GM12878 (cell line): ENCODE measurements at regions of chr11 and their contacts with region 1.

Region 1: GRCh38 chr11:43504316-43504950 is 145.7 kb downstream of the TTC17 start:
- DNase-seq: no peak
- ATAC-seq: peak; percentile 82
- H3K4me3 ChIP-seq: no peak overlapping the region
- H3K27ac ChIP-seq: no peak overlapping the region
- H3K4me1 ChIP-seq: no peaks in the 10 kb centered on the region
- H3K27me3 ChIP-seq: no peaks in the 10 kb centered on the region
- CTCF ChIP-seq: peak; percentile 24 to 54 (median 31); a peak in 4 of 6 replicates
- EP300 ChIP-seq: no peak
- POLR2A ChIP-seq: no peak
- RAD21 ChIP-seq: peak; percentile 68

Region 2: DNA sequence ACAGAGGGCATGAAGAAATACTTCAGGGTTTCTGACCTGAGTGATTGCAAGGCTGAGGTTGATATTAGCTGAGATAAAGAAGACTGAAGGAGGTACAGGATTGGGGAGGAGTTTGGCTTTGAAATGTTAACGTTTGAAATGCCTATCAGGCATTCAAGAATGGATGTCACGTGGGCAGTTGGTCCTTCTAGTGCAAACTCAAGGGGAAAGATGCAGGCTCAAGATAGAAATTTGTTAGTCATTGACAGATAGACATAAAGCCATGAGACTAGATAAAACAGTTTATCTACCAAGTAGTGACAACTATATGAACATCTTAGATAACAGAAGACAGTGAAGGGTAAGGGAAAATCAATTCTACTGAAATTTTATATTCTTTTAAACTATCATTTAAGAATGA is 122.6 kb before region 1 on chr11:
- CTCF ChIA-PET with region 1: no interaction called
- POLR2A ChIA-PET with region 1: no interaction called
- RAD21 ChIA-PET with region 1: no interaction called
- SMC1A ChIA-PET with region 1: no interaction called
- in situ Hi-C with region 1: no loop called
- intact Hi-C with region 1: no loop called
- DNase-seq: no peak
- ATAC-seq: no peak
- H3K4me3 ChIP-seq: no peak overlapping the region
- H3K27ac ChIP-seq: no peak overlapping the region
- H3K4me1 ChIP-seq: no peaks in the 10 kb centered on the region
- H3K27me3 ChIP-seq: no peaks in the 10 kb centered on the region
- CTCF ChIP-seq: no peak
- EP300 ChIP-seq: no peak
- POLR2A ChIP-seq: no peak
- RAD21 ChIP-seq: no peak

Region 3: GRCh38 chr11:43567396-43567975 is 63.1 kb after region 1 on chr11:
- CTCF ChIA-PET with region 1: interaction called, 31 read pairs
- POLR2A ChIA-PET with region 1: interaction called, 9 read pairs
- RAD21 ChIA-PET with region 1: no interaction called
- SMC1A ChIA-PET with region 1: interaction called, 8 read pairs
- in situ Hi-C with region 1: no loop called
- intact Hi-C with region 1: loop called (anchors 1 kb)
- DNase-seq: no peak
- ATAC-seq: peak; percentile 87
- H3K4me3 ChIP-seq: no peak overlapping the region
- H3K27ac ChIP-seq: no peak overlapping the region
- H3K4me1 ChIP-seq: no peaks in the 10 kb centered on the region
- H3K27me3 ChIP-seq: no peaks in the 10 kb centered on the region
- CTCF ChIP-seq: peak; percentile 67 to 74 (median 69)
- EP300 ChIP-seq: no peak
- POLR2A ChIP-seq: no peak
- RAD21 ChIP-seq: peak; percentile 65

Region 4: DNA sequence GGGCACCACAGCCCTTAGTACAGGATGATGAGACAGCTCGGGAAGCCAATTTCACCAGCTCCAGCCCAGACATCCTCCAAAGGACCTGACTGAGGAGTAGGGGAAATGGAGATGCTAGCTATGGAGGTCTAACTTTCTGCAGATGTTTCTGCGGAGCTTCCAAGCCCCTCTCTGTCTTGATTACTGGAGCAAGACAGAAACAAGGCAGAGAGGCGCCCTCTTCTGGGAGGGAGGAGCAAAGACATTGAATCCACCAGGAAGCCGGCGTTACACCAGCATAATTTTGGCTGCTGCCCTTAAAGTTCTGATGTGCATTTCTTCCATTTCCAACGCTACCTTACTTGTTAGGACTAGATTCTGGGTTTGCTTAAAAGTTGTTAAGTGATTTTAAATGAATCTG is 68.8 kb after region 1 on chr11:
- CTCF ChIA-PET with region 1: interaction called, 19 read pairs
- POLR2A ChIA-PET with region 1: interaction called, 9 read pairs
- RAD21 ChIA-PET with region 1: no interaction called
- SMC1A ChIA-PET with region 1: interaction called, 5 read pairs
- in situ Hi-C with region 1: no loop called
- intact Hi-C with region 1: no loop called
- DNase-seq: no peak
- ATAC-seq: peak; percentile 74
- H3K4me3 ChIP-seq: no peak overlapping the region
- H3K27ac ChIP-seq: no peak overlapping the region
- H3K4me1 ChIP-seq: no peaks in the 10 kb centered on the region
- H3K27me3 ChIP-seq: peaks cover 16 to 28% of the 10 kb centered on the region in 2 experiments
- CTCF ChIP-seq: peak; percentile 50 to 65 (median 57)
- EP300 ChIP-seq: no peak
- POLR2A ChIP-seq: no peak
- RAD21 ChIP-seq: peak; percentile 46